ENCODE measurements at regions of chr2 and their contacts with region 1.

Region 1: GRCh38 chr2:43100883-43101662 is 125.3 kb downstream of the ZFP36L2 start:
- DNase-seq: peak; percentile 76 to 80
- ATAC-seq: peak; percentile 32 to 89 (median 64)
- H3K4me3 ChIP-seq: peak overlapping the region; percentile 0 to 65 (median 51)
- H3K27ac ChIP-seq: peak overlapping the region; percentile 81 to 97 (median 92)
- H3K4me1 ChIP-seq: peaks cover 3 to 61% (median 36%) of the 10 kb centered on the region in 9 donors
- H3K27me3 ChIP-seq: no peaks in the 10 kb centered on the region
- CTCF ChIP-seq: no peak

Region 2: GRCh38 chr2:41907771-41908207 is 1193.3 kb before region 1 on chr2:
- intact Hi-C with region 1: no loop called
- DNase-seq: no peak
- ATAC-seq: no peak
- H3K4me3 ChIP-seq: no peak overlapping the region
- H3K27ac ChIP-seq: no peak overlapping the region
- H3K4me1 ChIP-seq: peaks cover 0 to 22% (median 13%) of the 10 kb centered on the region in 9 donors
- H3K27me3 ChIP-seq: no peaks in the 10 kb centered on the region
- CTCF ChIP-seq: no peak

Region 3: DNA sequence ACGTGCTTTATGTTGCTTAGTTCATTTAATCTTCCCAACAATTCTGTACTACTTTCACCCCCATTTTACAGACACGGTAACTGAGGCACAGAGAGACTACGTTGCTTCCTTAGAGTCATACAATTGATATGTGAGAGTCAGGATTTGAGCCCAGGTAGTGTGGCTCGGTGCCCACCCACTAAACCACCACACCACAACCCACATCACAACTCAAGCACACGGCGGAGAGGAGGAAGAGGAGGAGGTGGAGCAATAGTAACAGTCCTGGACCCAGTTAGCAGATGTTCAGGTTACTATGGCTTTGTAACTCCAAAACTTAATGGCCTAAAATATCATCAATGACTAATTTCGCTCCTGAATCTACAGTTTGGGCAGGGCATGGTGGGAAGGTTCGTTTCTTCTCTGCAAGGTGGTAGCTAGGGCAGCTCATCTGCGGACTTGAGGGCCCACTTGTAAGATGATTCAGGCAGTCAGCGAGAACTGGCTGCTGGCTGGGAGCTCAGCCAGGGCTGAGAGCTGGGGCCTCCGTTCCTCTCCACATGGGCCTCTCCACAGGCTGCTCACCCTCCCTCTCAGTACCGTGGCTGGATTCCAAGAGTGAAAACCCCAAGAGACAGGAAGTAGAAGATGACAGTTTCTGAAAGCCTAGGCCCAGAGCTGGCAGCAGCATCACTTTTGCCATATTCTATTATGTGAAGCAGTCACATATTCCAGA is 41.7 kb before region 1 on chr2:
- intact Hi-C with region 1: loop called in 1 of 10 experiments (anchors 5 kb)
- DNase-seq: peak; percentile 81 to 92
- ATAC-seq: peak; percentile 84 to 94 (median 91)
- H3K4me3 ChIP-seq: no peak overlapping the region
- H3K27ac ChIP-seq: peak overlapping the region in 7 of 10 donors; percentile 16 to 59 (median 37)
- H3K4me1 ChIP-seq: peaks cover 0 to 44% (median 25%) of the 10 kb centered on the region in 9 donors
- H3K27me3 ChIP-seq: no peaks in the 10 kb centered on the region
- CTCF ChIP-seq: no peak

Region 4: DNA sequence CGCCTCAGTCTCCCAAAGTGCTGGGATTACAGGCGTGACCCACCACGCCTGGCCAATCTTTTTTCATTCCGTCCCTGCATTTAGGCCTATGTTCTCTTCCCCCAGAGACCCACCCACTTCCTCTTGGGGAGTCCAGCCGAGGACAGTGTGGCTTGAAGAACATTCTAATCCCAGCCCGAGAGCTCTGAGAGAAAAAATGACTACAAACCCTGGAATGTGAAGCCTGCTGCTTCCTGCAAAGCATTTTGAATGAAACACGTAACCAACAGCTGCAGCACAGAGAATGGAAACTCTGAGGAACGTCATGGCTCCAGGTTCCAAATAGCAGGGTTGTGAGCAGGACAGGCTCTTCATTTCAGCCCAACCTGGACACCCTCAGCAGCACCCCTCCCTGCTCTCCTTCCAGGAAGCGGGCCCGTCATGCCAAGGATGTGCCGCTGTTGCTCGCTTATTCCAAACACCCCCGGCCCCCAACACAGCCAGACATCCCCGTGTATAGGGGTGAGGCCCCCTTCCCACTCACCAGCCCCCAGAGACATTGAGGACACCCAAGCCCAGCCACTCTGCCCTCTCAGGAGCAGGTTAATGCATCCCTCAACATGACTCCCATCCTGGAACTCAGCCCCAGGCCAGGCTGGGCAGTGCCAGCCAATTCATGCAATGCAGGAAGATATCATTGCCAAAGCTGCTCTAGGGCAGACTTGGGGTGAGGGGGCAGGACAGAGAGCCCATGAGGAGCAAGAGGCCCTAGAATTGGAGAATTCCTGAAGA is 14.4 kb before region 1 on chr2:
- intact Hi-C with region 1: loop called in 1 of 10 experiments (anchors 2 kb)
- DNase-seq: peak; percentile 51 to 88
- ATAC-seq: peak; percentile 75 to 89 (median 84)
- H3K4me3 ChIP-seq: no peak overlapping the region
- H3K27ac ChIP-seq: peak overlapping the region; percentile 76 to 93 (median 90)
- H3K4me1 ChIP-seq: peaks cover 48 to 67% (median 61%) of the 10 kb centered on the region in 9 donors
- H3K27me3 ChIP-seq: no peaks in the 10 kb centered on the region
- CTCF ChIP-seq: no peak

Measured in heart right ventricle (tissue), 16 donors.